Activated CD8-positive, alpha-beta T cell treated with anti-CD3 and anti-CD28 coated beads, Interleukin-2, amount 10 ng/mL, durations not matched to agents 7 days and 5 days (primary cell): ENCODE measurements at regions of chr9 and their contacts with region 1.

Region 1: DNA sequence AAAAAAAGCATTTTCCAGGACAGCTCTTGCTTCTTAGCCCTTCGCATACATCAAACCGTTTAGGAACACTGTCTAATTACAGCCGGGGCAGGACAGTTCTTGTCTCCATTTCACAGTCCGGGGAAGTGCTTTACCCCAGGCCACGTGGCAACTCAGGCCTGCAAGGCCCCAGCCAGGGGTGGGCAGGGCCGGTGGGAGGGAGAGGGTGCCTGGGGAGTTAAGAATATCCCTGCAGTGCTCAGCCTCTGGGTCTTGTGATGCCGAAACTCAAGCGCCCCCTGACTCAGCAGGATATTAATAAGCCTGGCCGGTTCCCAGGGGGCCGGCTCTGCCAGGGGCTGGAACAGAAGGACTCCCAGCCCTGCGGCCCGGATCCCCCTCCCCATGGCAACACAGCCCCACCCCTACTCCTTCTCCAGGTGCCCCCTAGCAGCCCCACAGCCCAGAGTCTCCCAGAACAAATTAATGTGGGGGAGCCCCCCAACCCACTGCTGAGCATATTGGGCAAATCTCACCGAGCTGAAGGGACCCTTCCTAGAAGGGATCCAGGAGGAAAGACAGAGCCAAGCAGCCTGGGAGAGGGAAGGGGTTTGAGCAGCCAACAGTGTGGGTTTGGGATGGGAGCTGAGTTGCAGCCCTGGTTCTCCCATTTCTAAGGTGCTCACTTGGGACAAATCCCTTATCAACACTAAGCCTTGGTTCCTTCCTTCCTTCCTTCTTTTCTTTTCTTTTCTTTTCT is 45.3 kb downstream of the PLPP7 start:
- DNase-seq: no peak
- ATAC-seq: no peak
- H3K4me3 Mint-ChIP-seq: no peak overlapping the region
- H3K27ac Mint-ChIP-seq: no peak overlapping the region
- H3K4me1 Mint-ChIP-seq: peaks cover 7% of the 10 kb centered on the region
- H3K27me3 Mint-ChIP-seq: peaks cover 3% of the 10 kb centered on the region

Region 2: DNA sequence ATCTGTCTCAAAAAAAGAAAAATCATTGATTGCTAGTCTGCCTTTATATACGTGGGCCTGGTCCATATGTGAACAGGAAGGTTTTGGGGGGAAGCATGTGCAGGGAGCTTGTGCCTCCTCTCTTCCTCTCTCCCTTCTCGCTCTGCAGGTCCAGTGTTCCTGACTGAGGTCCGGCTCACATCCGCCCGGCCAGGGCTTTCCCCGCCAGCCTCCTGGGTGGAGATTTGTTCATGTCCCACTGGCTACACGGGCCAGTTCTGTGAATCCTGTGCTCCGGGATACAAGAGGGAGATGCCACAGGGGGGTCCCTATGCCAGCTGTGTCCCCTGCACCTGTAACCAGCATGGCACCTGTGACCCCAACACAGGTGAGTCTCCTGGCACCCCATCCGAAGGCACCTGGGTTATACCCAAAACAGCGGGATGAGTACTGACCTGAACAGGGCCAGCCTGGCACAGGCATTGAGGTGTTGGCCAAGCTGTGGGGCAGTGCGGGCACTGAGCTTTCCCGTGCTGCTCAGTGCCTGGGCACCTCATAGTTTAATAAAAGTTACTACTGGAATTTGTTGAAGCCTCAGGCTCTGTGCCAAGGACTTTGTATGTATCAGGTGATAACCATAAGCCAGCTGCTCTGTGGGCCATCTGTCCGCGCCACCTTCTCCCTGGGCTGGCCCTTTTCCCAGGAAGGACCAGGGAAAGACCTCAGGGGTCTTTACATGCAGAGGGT is 277.9 kb before region 1 on chr9:
- CTCF ChIA-PET with region 1: interaction called, 21 read pairs
- POLR2A ChIA-PET with region 1: interaction called, 3 read pairs
- DNase-seq: no peak
- ATAC-seq: no peak
- H3K4me3 Mint-ChIP-seq: no peak overlapping the region
- H3K27ac Mint-ChIP-seq: no peak overlapping the region
- H3K4me1 Mint-ChIP-seq: no peaks in the 10 kb centered on the region
- H3K27me3 Mint-ChIP-seq: no peaks in the 10 kb centered on the region

Region 3: GRCh38 chr9:131178382-131178781 is 156.4 kb before region 1 on chr9:
- CTCF ChIA-PET with region 1: interaction called, 176 read pairs
- POLR2A ChIA-PET with region 1: interaction called, 6 read pairs
- DNase-seq: peak; percentile 86
- ATAC-seq: peak; percentile 99
- H3K4me3 Mint-ChIP-seq: no peak overlapping the region
- H3K27ac Mint-ChIP-seq: peak overlapping the region; percentile 48
- H3K4me1 Mint-ChIP-seq: peaks cover 11% of the 10 kb centered on the region
- H3K27me3 Mint-ChIP-seq: no peaks in the 10 kb centered on the region

Region 4: GRCh38 chr9:131237931-131238401 is 96.8 kb before region 1 on chr9:
- CTCF ChIA-PET with region 1: interaction called, 11 read pairs
- POLR2A ChIA-PET with region 1: interaction called, 3 read pairs
- DNase-seq: peak; percentile 94
- ATAC-seq: peak; percentile 98
- H3K4me3 Mint-ChIP-seq: peak overlapping the region; percentile 70
- H3K27ac Mint-ChIP-seq: peak overlapping the region; percentile 96
- H3K4me1 Mint-ChIP-seq: peaks cover 52% of the 10 kb centered on the region
- H3K27me3 Mint-ChIP-seq: no peaks in the 10 kb centered on the region

Region 5: DNA sequence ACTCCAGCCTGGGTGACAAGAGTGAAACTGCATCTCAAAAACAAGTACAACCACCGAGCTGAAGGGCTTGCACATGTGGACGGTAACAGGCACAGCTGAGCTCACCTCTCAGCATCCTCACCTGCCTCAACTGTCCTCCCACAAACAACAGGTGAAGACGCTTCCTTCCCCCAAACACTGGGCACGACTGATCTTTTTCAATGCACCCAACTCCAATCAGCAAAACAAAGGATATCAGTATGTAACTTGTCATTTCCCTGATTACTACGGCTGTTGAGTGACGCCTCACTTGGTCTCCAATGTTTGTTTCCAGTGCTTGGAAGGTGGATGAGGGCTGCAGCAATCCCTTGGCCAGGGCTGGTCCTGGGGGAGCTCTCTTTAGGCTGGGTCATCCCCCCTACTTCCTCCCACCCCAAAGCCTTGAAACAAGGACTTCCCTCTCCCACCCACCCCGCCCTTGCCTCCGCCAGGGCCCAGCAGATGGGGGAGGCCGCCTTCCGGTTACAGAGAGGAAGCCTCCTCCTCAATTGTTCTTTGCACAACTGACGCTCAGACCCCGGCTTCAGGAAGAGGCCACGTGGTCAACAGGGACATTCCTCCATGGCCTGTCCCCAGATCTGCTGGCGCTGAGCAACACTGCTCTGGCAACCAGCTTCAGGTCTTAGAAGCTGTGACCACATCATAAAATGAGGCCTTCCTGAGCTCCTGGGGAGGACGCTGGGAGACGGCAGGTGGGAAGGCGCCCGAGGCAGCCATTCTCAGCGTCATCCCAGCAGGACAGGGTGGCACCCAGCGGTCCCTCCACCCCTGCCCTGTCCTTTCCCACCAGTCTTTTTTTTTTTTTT is 64.4 kb before region 1 on chr9:
- CTCF ChIA-PET with region 1: interaction called, 10 read pairs
- POLR2A ChIA-PET with region 1: interaction called, 3 read pairs
- DNase-seq: peak; percentile 71
- ATAC-seq: peak; percentile 16
- H3K4me3 Mint-ChIP-seq: peak overlapping the region; percentile 99
- H3K27ac Mint-ChIP-seq: peak overlapping the region; percentile 99
- H3K4me1 Mint-ChIP-seq: peaks cover 59% of the 10 kb centered on the region
- H3K27me3 Mint-ChIP-seq: no peaks in the 10 kb centered on the region